WTC11 (cell line): ENCODE measurements at regions of chr6 and their contacts with region 1.

Region 1: DNA sequence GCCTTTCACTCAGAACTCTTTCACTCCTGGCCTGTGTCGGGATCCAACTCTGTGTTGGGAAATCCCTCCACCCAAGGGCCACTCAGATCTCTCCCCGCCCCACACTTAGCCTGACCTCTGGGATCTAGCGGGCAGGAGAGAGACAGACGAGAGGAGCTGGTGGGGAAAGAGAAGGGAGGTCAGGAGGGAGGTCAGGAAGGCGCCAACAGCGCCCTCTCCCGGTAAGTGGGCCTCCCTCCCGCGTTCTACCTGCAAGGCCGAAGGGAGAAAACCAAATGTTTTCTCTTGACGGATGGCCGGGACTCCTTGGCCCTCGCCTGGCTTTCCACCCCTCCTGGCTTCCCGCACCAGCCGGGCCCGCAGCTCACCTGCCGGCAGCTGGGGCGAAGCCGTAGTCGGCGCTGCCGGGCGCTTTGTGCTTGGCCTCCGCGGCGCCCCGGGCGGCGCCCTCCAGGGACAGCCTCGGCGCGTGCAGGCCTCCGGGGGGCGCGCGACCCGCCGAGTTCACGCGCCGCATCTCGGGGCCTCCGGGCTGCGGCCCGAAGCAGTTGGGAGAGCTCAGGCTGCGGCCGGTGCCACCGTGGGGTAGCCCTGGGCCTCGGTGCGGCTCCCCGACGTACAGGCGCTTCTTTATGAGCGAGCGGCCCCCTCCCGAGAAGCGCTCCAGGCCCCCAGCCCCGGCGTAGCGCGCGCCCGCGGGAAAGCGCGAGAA is 38.2 kb downstream of the C6orf132 start:
- DNase-seq: peak; percentile 85
- ATAC-seq: peak; percentile 72
- H3K4me3 Mint-ChIP-seq: peak overlapping the region; percentile 51
- H3K27ac Mint-ChIP-seq: peak overlapping the region; percentile 57
- H3K4me1 Mint-ChIP-seq: peaks cover 25% of the 10 kb centered on the region
- H3K27me3 Mint-ChIP-seq: peaks cover 9% of the 10 kb centered on the region
- CTCF ChIP-seq: peak; percentile 91

Region 2: GRCh38 chr6:42017021-42017643 is 87.1 kb before region 1 on chr6:
- CTCF ChIA-PET with region 1: no interaction called
- POLR2A ChIA-PET with region 1: no interaction called
- DNase-seq: no peak
- ATAC-seq: no peak
- H3K4me3 Mint-ChIP-seq: no peak overlapping the region
- H3K27ac Mint-ChIP-seq: peak overlapping the region; percentile 65; the same call in 1 of the 2 replicates
- H3K4me1 Mint-ChIP-seq: peaks cover 6% of the 10 kb centered on the region
- H3K27me3 Mint-ChIP-seq: no peaks in the 10 kb centered on the region
- CTCF ChIP-seq: no peak

Region 3: DNA sequence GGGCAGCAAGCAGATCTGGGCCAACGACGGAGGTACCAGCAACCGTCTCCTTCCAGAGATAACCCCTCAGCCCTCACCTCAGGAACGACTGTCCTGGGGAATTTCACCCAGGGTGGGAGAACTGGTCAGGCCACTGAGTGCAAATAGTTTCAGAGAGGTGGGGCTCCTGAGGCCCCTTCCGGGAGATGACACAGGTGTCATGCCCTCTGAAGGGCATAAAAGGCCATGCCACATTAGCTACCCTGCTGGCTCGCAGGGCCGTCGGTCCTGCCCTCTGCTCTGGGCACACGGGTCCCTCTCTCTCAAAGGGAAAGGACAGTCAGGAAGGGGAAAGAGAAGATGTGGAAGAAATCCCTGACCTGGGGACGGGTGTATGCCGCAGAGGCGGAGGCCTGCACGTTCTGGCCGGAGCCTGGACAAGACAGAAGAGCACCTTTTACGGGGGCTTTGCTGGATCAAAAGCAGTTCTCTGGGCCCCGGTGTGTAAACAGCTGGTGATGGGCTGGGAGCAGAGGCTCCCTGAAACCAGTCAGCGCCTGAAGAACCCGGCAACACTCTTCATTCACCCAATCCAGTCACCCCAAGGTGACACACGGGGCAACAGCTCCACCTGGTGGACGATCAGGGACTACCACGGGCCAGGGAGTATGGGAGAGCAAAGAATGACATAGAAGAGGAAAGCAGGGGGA is 60.3 kb before region 1 on chr6:
- CTCF ChIA-PET with region 1: interaction called, 10 read pairs
- POLR2A ChIA-PET with region 1: no interaction called
- DNase-seq: peak; percentile 96
- ATAC-seq: peak; percentile 78
- H3K4me3 Mint-ChIP-seq: peak overlapping the region; percentile 38; the same call in 1 of the 2 replicates
- H3K27ac Mint-ChIP-seq: no peak overlapping the region
- H3K4me1 Mint-ChIP-seq: peaks cover 42% of the 10 kb centered on the region
- H3K27me3 Mint-ChIP-seq: peaks cover 82% of the 10 kb centered on the region
- CTCF ChIP-seq: peak; percentile 97

Region 4: GRCh38 chr6:42086046-42087035 is 17.9 kb before region 1 on chr6:
- CTCF ChIA-PET with region 1: interaction called, 127 read pairs
- POLR2A ChIA-PET with region 1: no interaction called
- DNase-seq: peak; percentile 38
- ATAC-seq: peak; percentile 63
- H3K4me3 Mint-ChIP-seq: no peak overlapping the region
- H3K27ac Mint-ChIP-seq: no peak overlapping the region
- H3K4me1 Mint-ChIP-seq: peaks cover 14% of the 10 kb centered on the region
- H3K27me3 Mint-ChIP-seq: peaks cover 42% of the 10 kb centered on the region
- CTCF ChIP-seq: 0 out of 2 replicates have a peak, but pooled peaks have one; percentile 17

Region 5: GRCh38 chr6:42128460-42129068 is 24.3 kb after region 1 on chr6:
- CTCF ChIA-PET with region 1: interaction called, 45 read pairs
- POLR2A ChIA-PET with region 1: no interaction called
- DNase-seq: no peak
- ATAC-seq: no peak
- H3K4me3 Mint-ChIP-seq: no peak overlapping the region
- H3K27ac Mint-ChIP-seq: 0 out of 2 replicates have a peak overlapping the region, but pooled peaks have one; percentile 45
- H3K4me1 Mint-ChIP-seq: peaks cover 12% of the 10 kb centered on the region
- H3K27me3 Mint-ChIP-seq: no peaks in the 10 kb centered on the region
- CTCF ChIP-seq: no peak

Region 6: GRCh38 chr6:42142118-42142931 is 38.1 kb after region 1 on chr6 and contains the start of gene C6orf132:
- CTCF ChIA-PET with region 1: interaction called, 45 read pairs
- POLR2A ChIA-PET with region 1: interaction called, 5 read pairs
- DNase-seq: peak; percentile 88
- ATAC-seq: peak; percentile 86
- H3K4me3 Mint-ChIP-seq: peak within 1 kb of the TSS; percentile 80
- H3K27ac Mint-ChIP-seq: peak within 1 kb of the TSS; percentile 81
- H3K4me1 Mint-ChIP-seq: peaks cover 45% of the 10 kb centered on the region
- H3K27me3 Mint-ChIP-seq: no peaks in the 10 kb centered on the region; the same call in 1 of the 2 replicates
- CTCF ChIP-seq: no peak
- total RNA-seq, gene C6orf132: 38.1 to 52.6 TPM (median 38.2 TPM) in 3 replicates

Region 7: DNA sequence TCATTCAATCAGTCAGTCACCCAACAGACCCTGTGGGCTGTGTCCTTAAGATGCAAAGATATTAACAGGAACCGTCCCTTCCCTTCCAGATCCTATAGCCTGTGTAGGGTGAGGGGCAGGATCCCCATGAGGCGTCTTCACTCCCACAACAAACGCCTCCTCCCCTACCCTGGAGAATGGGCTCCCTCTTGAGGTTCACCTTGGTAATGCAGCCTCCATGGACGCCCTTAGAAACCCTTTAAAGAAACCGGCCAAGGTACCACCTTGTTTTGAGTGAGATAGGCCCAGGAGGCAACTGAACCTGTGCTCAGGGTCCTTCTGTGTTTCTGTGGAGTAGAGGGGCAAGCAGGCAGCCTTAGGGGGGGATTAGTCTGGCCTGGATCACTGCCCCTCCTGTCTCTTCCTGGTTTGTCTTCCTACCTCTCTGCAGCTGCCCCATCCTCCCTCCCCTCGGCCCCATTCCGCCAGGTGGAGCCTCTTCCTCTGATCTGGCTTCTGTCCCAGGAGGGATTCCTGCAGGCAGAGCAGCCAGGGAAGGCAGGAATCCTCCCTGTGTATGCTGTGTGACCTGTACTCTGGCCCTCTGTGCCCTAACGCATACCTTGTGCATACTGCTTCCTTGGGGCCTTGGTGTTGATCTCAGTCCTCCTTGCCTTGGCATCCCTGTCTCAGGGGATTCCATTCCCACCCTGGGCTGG is 62.3 kb after region 1 on chr6:
- CTCF ChIA-PET with region 1: interaction called, 44 read pairs
- POLR2A ChIA-PET with region 1: no interaction called
- DNase-seq: peak; percentile 96
- ATAC-seq: peak; percentile 91
- H3K4me3 Mint-ChIP-seq: no peak overlapping the region
- H3K27ac Mint-ChIP-seq: peak overlapping the region; percentile 81
- H3K4me1 Mint-ChIP-seq: peaks cover 45% of the 10 kb centered on the region
- H3K27me3 Mint-ChIP-seq: peaks cover 11% of the 10 kb centered on the region
- CTCF ChIP-seq: peak; percentile 96

Region 8: DNA sequence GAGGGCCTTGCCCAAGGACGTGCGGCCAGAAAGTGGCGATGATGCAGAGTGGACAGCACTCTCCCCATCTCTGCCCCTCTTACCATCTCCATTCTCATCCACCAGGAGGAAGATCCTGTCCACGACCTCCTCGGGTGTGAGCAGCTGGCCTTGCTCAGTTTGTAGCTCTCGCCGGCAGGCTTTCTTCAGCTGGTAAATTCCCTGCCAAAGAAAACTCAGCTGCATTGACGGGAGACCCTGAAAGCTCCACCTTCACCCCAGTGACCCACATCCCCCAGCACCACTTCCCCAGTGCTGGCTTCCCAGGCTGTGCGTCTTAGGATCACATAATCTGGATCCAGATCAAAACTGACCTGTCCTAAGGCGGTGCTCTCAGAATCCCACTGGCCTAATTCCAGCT is 81.3 kb after region 1 on chr6:
- CTCF ChIA-PET with region 1: interaction called, 22 read pairs
- POLR2A ChIA-PET with region 1: no interaction called
- DNase-seq: no peak
- ATAC-seq: no peak; the same call in 1 of the 2 replicates
- H3K4me3 Mint-ChIP-seq: no peak overlapping the region
- H3K27ac Mint-ChIP-seq: no peak overlapping the region
- H3K4me1 Mint-ChIP-seq: peaks cover 34% of the 10 kb centered on the region
- H3K27me3 Mint-ChIP-seq: no peaks in the 10 kb centered on the region; the same call in 1 of the 2 replicates
- CTCF ChIP-seq: no peak